Caco-2 (cell line): ENCODE measurements at regions of chr1 and their contacts with region 1.

Region 1: GRCh38 chr1:9867408-9868243 is 42.4 kb downstream of the CTNNBIP1 start:
- DNase-seq: peak; percentile 68 to 82
- H3K4me3 ChIP-seq: no peak overlapping the region
- H3K4me3 Mint-ChIP-seq: no peak overlapping the region
- H3K27ac Mint-ChIP-seq: no peak overlapping the region
- H3K4me1 ChIP-seq: no peaks in the 10 kb centered on the region
- H3K4me1 Mint-ChIP-seq: no peaks in the 10 kb centered on the region
- H3K27me3 ChIP-seq: no peaks in the 10 kb centered on the region
- H3K27me3 Mint-ChIP-seq: no peaks in the 10 kb centered on the region
- CTCF ChIP-seq: peak; percentile 89 to 95

Region 2: DNA sequence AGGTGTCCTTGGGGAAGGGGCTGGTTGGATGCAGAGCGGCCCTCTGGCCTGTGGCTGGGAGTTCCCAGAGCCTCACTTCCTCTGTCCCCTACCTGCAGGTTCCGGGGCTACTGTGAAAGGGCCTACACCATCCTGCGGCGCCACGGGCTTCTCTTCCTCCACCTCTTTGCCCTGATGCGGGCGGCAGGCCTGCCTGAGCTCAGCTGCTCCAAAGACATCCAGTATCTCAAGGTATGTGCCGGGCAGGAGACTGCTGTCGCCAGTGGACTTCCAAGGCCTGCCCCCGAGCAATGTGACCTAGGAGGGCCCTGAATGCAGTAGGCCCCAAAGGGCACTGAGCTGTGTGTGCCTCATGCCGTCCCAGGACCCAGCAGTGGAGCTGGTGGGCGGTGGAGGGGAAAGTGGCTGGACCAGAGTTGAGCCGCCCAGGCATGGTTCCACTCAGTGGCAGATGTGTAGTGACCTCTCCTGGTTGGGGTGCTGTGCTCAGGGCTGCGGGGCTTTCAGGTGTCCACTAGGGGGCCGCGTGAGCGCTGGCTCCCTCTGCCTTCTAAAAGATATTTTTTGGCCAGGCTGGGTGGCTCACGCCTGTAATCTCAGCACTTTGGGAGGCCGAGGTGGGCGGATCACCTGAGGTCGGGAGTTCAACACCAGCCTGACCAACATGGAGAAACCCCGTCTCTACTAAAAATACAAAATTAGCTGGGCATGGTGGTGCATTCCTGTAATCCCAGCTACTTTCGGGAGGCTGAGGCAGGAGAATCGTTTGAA is 142.7 kb before region 1 on chr1:
- CTCF ChIA-PET with region 1: no interaction called
- POLR2A ChIA-PET with region 1: no interaction called
- intact Hi-C with region 1: loop called (anchors 10 kb)
- DNase-seq: peak in 1 of 2 experiments; percentile 60
- H3K4me3 ChIP-seq: no peak overlapping the region
- H3K4me3 Mint-ChIP-seq: no peak overlapping the region
- H3K27ac Mint-ChIP-seq: no peak overlapping the region
- H3K4me1 ChIP-seq: no peaks in the 10 kb centered on the region
- H3K4me1 Mint-ChIP-seq: no peaks in the 10 kb centered on the region
- H3K27me3 ChIP-seq: no peaks in the 10 kb centered on the region
- H3K27me3 Mint-ChIP-seq: no peaks in the 10 kb centered on the region
- CTCF ChIP-seq: peak; percentile 71 to 79